ENCODE measurements at regions of chr11 and their contacts with region 1.

Region 1: GRCh38 chr11:133271871-133272776 is 260.2 kb downstream of the OPCML start:
- DNase-seq: no peak
- ATAC-seq: no peak
- H3K4me3 ChIP-seq: no peak overlapping the region
- H3K4me3 Mint-ChIP-seq: no peak overlapping the region
- H3K27ac ChIP-seq: no peak overlapping the region
- H3K27ac Mint-ChIP-seq: no peak overlapping the region
- H3K4me1 ChIP-seq: no peaks in the 10 kb centered on the region
- H3K4me1 Mint-ChIP-seq: no peaks in the 10 kb centered on the region
- H3K27me3 ChIP-seq: no peaks in the 10 kb centered on the region
- H3K27me3 Mint-ChIP-seq: peaks cover 0 to 7% of the 10 kb centered on the region in 2 donors
- CTCF ChIP-seq: no peak

Region 2: GRCh38 chr11:133215590-133216230 is 56.4 kb before region 1 on chr11:
- intact Hi-C with region 1: loop called (anchors 2 kb)
- DNase-seq: no peak
- ATAC-seq: no peak
- H3K4me3 ChIP-seq: no peak overlapping the region
- H3K4me3 Mint-ChIP-seq: no peak overlapping the region
- H3K27ac ChIP-seq: no peak overlapping the region
- H3K27ac Mint-ChIP-seq: no peak overlapping the region
- H3K4me1 ChIP-seq: no peaks in the 10 kb centered on the region
- H3K4me1 Mint-ChIP-seq: no peaks in the 10 kb centered on the region
- H3K27me3 ChIP-seq: no peaks in the 10 kb centered on the region
- H3K27me3 Mint-ChIP-seq: peaks cover 10 to 14% of the 10 kb centered on the region in 2 donors
- CTCF ChIP-seq: no peak

Measured in natural killer cell (primary cell).